ENCODE measurements at regions of chr3 and their contacts with region 1.

Region 1: GRCh38 chr3:121545574-121546455 is at the start of gene POLQ:
- DNase-seq: peak; percentile 85 to 88
- H3K4me3 ChIP-seq: peak within 1 kb of the TSS; percentile 62
- H3K27ac ChIP-seq: peak within 1 kb of the TSS; percentile 24; the same call in 1 of the 2 replicates
- H3K4me1 ChIP-seq: peaks cover 8% of the 10 kb centered on the region; the same call in 1 of the 2 replicates
- H3K27me3 ChIP-seq: no peaks in the 10 kb centered on the region
- CTCF ChIP-seq: no peak
- total RNA-seq, gene POLQ: 14.3 and 15.6 TPM in 2 replicates

Region 2: GRCh38 chr3:120956143-120956542 is 589.7 kb before region 1 on chr3:
- CTCF ChIA-PET with region 1: no interaction called
- POLR2A ChIA-PET with region 1: no interaction called
- intact Hi-C with region 1: no loop called
- DNase-seq: no peak
- H3K4me3 ChIP-seq: no peak overlapping the region
- H3K27ac ChIP-seq: no peak overlapping the region
- H3K4me1 ChIP-seq: no peaks in the 10 kb centered on the region
- H3K27me3 ChIP-seq: no peaks in the 10 kb centered on the region
- CTCF ChIP-seq: no peak

Region 3: DNA sequence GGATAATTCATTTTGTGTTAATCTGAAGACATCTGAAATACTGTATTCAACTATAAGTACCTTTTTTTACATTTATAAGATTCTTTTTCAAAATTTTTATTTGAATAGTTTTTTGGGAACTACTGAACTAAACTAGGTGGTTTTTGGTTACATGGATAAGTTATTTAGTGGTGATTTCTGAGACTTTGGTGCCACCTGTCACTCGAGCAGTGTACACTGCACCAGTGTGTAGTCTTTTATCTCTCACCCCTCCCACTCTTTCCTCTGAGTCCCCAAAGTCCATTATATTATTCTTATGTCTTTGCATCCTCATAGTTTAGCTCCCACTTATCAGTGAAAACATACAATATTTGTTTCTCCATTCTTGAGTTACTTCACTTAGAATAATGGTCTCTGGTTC is 566.9 kb after region 1 on chr3:
- CTCF ChIA-PET with region 1: no interaction called
- POLR2A ChIA-PET with region 1: no interaction called
- intact Hi-C with region 1: loop called (anchors 2 kb)
- DNase-seq: no peak
- H3K4me3 ChIP-seq: no peak overlapping the region
- H3K27ac ChIP-seq: no peak overlapping the region
- H3K4me1 ChIP-seq: no peaks in the 10 kb centered on the region
- H3K27me3 ChIP-seq: peaks cover 3% of the 10 kb centered on the region; the same call in 1 of the 2 replicates
- CTCF ChIP-seq: 0 out of 2 replicates have a peak, but pooled peaks have one; percentile 20

Region 4: DNA sequence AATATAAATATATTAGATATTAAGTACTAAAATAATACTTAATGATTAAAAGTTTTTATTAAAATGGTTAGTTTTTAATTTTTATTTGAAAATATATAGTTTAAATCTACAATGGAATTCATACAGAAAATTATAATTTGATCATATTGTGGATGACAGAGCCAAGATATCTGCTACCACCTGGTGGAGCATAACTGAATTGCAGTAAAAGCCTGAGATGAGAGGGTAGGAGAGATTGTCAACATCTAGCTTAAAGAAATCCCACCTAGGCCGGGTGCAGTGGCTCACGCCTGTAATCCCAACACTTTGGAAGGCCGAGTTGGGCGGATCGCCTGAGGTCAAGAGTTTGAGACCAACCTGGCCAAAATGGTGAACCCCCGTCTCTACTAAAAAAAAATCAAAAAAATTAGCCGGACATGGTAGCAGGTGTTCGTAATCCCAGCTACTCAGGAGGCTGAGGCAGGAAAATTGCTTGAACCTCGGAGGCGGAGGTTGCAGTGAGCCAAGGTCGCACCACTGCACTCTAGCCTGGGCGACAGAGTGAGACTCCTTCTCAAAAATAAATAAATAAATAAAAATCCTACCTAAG is 754.2 kb after region 1 on chr3:
- CTCF ChIA-PET with region 1: no interaction called
- POLR2A ChIA-PET with region 1: no interaction called
- intact Hi-C with region 1: loop called (anchors 1 kb)
- DNase-seq: no peak
- H3K4me3 ChIP-seq: no peak overlapping the region
- H3K27ac ChIP-seq: no peak overlapping the region
- H3K4me1 ChIP-seq: 0 out of 2 replicates have a peak, but pooled peaks cover 7% of the 10 kb centered on the region
- H3K27me3 ChIP-seq: no peaks in the 10 kb centered on the region
- CTCF ChIP-seq: peak; percentile 75

Region 5: DNA sequence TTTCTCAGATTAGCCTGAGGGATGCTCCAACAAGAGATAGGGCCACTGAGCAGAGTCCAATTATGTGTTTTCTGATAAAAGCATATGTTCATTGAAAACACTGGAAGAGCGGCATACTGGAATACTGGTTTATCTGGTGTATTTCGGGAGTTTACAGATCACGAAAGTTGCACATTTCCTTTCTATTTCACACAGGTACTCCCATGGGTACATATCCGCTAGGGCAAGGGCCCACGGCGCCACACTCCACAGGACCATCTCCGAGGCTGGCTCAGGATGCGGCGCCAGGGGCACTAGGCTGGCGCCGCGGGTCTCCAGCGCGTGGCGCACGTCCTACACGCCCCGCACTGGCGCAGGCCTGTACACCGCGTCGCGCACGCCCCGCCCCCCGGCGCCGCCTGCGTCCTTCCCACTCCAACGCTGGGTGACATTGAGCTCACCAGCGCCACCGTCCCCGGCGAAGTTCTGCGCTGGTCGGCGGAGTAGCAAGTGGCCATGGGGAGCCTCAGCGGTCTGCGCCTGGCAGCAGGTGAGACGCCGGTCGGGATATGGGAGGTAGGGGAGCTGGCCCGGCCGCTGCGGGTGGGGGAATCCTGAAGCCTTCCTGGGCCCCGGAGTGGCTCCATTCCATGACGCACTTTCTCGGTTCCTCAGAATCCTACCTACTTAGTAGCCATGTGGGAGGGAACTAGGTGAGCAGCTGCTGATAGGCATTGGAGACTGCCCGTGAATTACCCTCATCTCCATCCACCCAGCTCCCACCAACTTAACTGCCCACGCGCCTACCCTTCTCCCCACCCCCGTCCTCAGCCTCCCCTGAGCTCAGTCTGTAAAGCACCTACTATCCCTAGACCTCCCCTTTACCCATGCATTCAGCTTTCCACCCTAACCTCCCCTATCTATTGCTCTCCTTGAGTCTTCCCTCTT is 838.2 kb after region 1 on chr3 and contains the start of gene FAM162A:
- CTCF ChIA-PET with region 1: interaction called, 4 read pairs
- POLR2A ChIA-PET with region 1: no interaction called
- intact Hi-C with region 1: loop called (anchors 5 kb)
- DNase-seq: peak; percentile 87 to 96
- H3K4me3 ChIP-seq: peak within 1 kb of the TSS; percentile 85
- H3K27ac ChIP-seq: peak within 1 kb of the TSS; percentile 66
- H3K4me1 ChIP-seq: peaks cover 18% of the 10 kb centered on the region; the same call in 1 of the 2 replicates
- H3K27me3 ChIP-seq: no peaks in the 10 kb centered on the region
- CTCF ChIP-seq: peak; percentile 64
- total RNA-seq, gene FAM162A: 36.8 and 41.0 TPM in 2 replicates